ENCODE measurements at regions of chr7 and their contacts with region 1.

Region 1: GRCh38 chr7:36366718-36367560 is 22.7 kb upstream of the ANLN start:
- DNase-seq: peak; percentile 93
- H3K4me3 Mint-ChIP-seq: peak overlapping the region; percentile 88
- H3K27ac Mint-ChIP-seq: peak overlapping the region; percentile 60
- H3K4me1 Mint-ChIP-seq: peaks cover 20% of the 10 kb centered on the region
- H3K27me3 Mint-ChIP-seq: peaks cover 44% of the 10 kb centered on the region

Region 2: GRCh38 chr7:36250317-36250716 is 116.6 kb before region 1 on chr7:
- CTCF ChIA-PET with region 1: no interaction called
- DNase-seq: no peak
- H3K4me3 Mint-ChIP-seq: no peak overlapping the region
- H3K27ac Mint-ChIP-seq: no peak overlapping the region
- H3K4me1 Mint-ChIP-seq: no peaks in the 10 kb centered on the region
- H3K27me3 Mint-ChIP-seq: no peaks in the 10 kb centered on the region

Region 3: DNA sequence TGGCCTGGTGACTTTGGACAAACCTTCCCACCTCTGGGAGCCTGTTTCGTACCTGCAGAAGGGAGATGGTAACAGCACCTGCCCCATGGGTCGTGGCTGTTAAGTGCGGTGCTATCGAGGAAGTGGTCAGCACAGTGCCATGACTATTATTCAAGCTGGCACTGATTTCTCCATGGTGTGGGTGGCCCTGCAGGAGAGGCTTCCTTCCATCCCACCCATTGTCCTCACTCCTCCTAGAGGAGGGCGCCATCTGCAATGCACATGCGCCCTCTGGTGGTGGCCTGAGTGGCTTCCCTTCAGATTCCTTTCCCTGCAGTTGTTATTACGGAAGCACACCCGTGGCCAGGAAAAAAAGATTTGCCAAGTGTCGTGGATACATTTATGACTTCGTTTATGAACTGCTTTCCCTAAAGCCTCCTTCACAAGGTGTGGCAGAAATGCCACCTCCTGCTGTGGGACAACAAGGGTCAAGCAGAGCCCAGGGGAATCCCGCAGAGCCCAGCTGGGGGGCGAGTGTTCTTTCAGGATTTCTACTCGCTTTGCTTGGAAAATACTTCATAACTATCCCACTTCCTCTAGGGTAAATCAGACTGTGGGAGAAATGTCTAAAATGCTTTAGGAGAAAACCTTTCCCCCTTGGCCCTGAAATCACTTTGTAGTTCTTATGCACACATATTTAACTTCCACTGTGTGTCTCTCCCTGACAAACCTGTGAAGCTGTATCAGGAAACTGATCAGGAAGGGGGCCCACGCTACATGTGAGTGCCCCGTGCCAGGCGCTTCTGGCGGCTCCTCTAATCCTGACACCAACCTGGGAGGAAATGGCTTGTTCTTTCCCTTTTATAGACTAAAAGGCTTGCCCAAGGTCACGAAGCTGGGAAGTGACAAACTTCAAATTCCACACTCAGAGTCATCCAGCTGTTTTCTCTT is 75.3 kb before region 1 on chr7:
- CTCF ChIA-PET with region 1: no interaction called
- DNase-seq: peak; percentile 79
- H3K4me3 Mint-ChIP-seq: peak overlapping the region; percentile 27
- H3K27ac Mint-ChIP-seq: no peak overlapping the region
- H3K4me1 Mint-ChIP-seq: peaks cover 53% of the 10 kb centered on the region
- H3K27me3 Mint-ChIP-seq: peaks cover 6% of the 10 kb centered on the region

Region 4: DNA sequence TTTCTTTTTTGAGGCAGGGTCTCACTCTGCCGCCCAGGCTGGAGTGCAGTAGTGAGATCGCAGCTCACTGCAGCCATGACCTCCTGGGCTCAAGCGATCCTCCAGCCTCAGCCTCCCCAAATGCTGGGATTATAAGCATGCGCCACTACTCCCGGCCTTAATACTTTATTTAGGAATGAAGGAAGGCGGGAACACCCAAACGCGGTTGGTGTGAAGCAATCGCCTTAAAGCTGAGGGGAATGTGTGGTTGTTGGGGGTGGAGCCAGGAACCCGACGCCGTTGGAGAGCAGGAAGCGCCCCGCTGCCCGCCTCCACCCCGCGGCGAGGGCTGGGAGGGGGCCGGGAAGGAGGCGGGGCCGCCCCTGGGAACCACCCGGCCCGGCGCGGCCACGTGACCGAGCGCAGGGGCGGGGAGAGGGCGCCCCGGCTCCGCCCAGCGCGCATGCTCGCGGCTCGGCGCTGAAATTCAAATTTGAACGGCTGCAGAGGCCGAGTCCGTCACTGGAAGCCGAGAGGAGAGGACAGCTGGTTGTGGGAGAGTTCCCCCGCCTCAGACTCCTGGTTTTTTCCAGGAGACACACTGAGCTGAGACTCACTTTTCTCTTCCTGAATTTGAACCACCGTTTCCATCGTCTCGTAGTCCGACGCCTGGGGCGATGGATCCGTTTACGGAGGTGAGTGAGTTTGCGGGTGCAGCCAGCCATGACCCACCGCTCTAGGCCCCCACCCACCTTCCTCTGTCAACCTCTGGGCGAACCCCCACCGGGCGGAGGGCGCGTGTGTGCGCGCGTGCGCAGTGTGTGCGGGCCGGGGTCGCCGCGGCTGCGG is 22.6 kb after region 1 on chr7 and contains the start of gene ANLN:
- CTCF ChIA-PET with region 1: interaction called, 11 read pairs
- DNase-seq: peak; percentile 88
- H3K4me3 Mint-ChIP-seq: peak within 1 kb of the TSS; percentile 85
- H3K27ac Mint-ChIP-seq: peak within 1 kb of the TSS; percentile 83
- H3K4me1 Mint-ChIP-seq: peaks cover 39% of the 10 kb centered on the region
- H3K27me3 Mint-ChIP-seq: peaks cover 20% of the 10 kb centered on the region

Measured in activated naive CD4-positive, alpha-beta T cell treated with anti-CD3 and anti-CD28 coated beads, Interleukin-2, amount 10 ng/mL, durations not matched to agents 7 days and 5 days (primary cell).